ENCODE measurements at regions of chr5 and their contacts with region 1.

Region 1: GRCh38 chr5:141420855-141421496 is at the start of gene PCDHGA11:
- H3K4me3 ChIP-seq: peak within 1 kb of the TSS; percentile 67
- H3K27ac ChIP-seq: no peak within 1 kb of the TSS
- H3K4me1 ChIP-seq: no peaks in the 10 kb centered on the region
- CTCF ChIP-seq: peak; percentile 59

Region 2: GRCh38 chr5:140821375-140822280 is 599.3 kb before region 1 on chr5 and contains the start of gene PCDHA5:
- CTCF ChIA-PET with region 1: no interaction called
- POLR2A ChIA-PET with region 1: no interaction called
- H3K4me3 ChIP-seq: no peak within 1 kb of the TSS
- H3K27ac ChIP-seq: no peak within 1 kb of the TSS
- H3K4me1 ChIP-seq: no peaks in the 10 kb centered on the region
- CTCF ChIP-seq: no peak

Region 3: DNA sequence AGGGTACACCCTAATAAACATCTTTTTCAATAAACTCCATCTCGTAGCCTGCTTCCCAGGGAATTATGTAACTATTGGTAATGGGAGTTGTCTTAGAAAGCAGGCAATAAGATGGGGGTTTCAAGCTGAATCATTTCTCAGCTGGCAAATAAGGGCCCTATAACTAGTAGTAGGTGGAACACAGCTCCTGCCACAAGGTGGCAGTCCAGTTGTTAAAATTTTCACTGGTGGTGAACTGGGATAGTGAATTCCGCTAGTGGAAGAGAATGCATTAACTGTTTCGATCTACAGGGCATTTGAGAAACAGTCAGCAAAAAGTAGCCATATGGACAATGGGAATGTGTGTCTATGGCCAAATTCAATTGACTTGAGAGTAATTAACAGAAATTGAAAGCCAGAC is 148.1 kb before region 1 on chr5:
- CTCF ChIA-PET with region 1: no interaction called
- POLR2A ChIA-PET with region 1: no interaction called
- H3K4me3 ChIP-seq: no peak overlapping the region
- H3K27ac ChIP-seq: no peak overlapping the region
- H3K4me1 ChIP-seq: no peaks in the 10 kb centered on the region
- CTCF ChIP-seq: no peak

Region 4: GRCh38 chr5:141349917-141350619 is 70.9 kb before region 1 on chr5 and contains the start of gene PCDHGB1:
- CTCF ChIA-PET with region 1: interaction called, 11 read pairs
- POLR2A ChIA-PET with region 1: no interaction called
- H3K4me3 ChIP-seq: peak within 1 kb of the TSS; percentile 34
- H3K27ac ChIP-seq: no peak within 1 kb of the TSS
- H3K4me1 ChIP-seq: peaks cover 2% of the 10 kb centered on the region; the same call in 1 of the 2 replicates
- CTCF ChIP-seq: peak; percentile 47; the same call in 1 of the 2 replicates

Region 5: DNA sequence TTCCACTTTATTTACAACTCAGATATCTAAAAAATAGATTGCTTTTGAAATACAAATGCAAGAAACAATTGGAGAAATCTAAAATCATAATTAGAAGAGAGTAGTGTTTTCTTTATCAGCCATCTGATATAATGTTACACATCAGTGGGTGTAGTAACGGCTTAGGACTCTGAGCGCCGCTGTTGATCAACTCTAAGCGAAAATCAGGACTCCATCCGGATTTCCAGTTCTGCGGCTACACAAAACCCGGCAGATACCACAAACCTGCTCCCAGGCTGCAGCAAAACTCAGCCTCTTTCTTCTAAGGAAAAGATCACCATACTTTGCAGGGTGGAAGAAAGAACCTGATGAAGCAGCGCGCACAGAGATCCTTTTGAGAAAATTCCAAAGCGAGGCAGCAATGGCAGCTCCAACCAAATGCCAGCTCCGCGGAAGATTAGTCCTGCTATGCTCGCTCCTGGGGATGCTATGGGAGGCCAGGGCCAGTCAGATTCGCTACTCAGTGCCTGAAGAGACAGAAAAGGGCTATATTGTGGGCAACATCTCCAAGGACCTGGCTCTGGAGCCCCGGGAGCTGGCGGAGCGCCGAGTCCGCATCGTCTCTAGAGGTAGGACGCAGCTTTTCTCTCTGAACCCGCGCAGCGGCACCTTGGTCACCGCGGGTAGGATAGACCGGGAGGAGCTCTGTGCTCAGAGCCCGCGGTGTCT is 18.3 kb before region 1 on chr5 and contains the start of gene PCDHGA9:
- CTCF ChIA-PET with region 1: interaction called, 15 read pairs
- POLR2A ChIA-PET with region 1: no interaction called
- H3K4me3 ChIP-seq: no peak within 1 kb of the TSS
- H3K27ac ChIP-seq: no peak within 1 kb of the TSS
- H3K4me1 ChIP-seq: no peaks in the 10 kb centered on the region
- CTCF ChIP-seq: no peak

Region 6: GRCh38 chr5:141484641-141485311 is 63.8 kb after region 1 on chr5 and contains the start of gene PCDHGC4:
- CTCF ChIA-PET with region 1: interaction called, 13 read pairs
- POLR2A ChIA-PET with region 1: no interaction called
- H3K4me3 ChIP-seq: peak within 1 kb of the TSS; percentile 40
- H3K27ac ChIP-seq: no peak within 1 kb of the TSS
- H3K4me1 ChIP-seq: peaks cover 9% of the 10 kb centered on the region
- CTCF ChIP-seq: no peak

Region 7: DNA sequence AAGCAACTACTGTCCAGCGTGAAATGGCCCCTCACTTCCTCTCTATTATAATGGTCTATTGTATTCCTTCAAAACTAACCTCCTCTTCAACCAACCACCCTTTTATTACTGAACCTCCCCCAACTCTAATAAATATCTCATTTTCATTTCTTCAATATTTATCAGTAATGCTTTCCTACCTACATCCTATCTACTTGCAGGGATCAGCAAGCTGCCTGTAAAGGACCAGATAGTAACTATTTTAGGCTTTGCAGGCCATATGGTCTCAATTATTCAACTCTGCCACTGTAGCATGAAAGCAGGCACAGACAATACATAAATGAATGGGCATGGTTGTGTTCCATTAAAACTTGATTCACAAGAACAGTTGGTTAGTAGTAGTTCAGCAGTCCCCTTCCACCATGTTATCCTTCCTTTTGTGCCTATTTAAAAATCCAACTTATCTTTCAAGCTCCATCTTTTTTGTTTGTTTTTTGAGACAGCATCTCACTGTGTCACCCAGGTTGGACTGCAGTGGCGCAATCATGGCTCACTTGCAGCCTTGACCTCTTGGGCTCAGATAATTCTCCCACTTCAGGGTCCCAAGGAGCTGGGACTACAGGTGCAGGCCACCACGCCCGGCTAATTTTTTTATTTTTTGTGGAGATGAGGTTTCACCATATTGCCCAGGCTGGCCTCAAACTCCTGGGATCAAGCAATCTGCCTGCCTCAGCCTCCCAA is 113.7 kb after region 1 on chr5:
- CTCF ChIA-PET with region 1: interaction called, 160 read pairs
- POLR2A ChIA-PET with region 1: no interaction called
- H3K4me3 ChIP-seq: no peak overlapping the region
- H3K27ac ChIP-seq: no peak overlapping the region
- H3K4me1 ChIP-seq: no peaks in the 10 kb centered on the region
- CTCF ChIP-seq: no peak

Measured in HEK293 (cell line).